CD8-positive, alpha-beta T cell (primary cell): ENCODE measurements at regions of chr3 and their contacts with region 1.

Region 1: GRCh38 chr3:101069901-101070798 is 76.9 kb upstream of the ABI3BP start:
- DNase-seq: peak; percentile 3 to 63 (median 41)
- ATAC-seq: peak; percentile 64
- H3K4me3 ChIP-seq: no peak overlapping the region
- H3K4me3 Mint-ChIP-seq: no peak overlapping the region
- H3K27ac ChIP-seq: no peak overlapping the region
- H3K27ac Mint-ChIP-seq: no peak overlapping the region
- H3K4me1 ChIP-seq: no peaks in the 10 kb centered on the region
- H3K4me1 Mint-ChIP-seq: no peaks in the 10 kb centered on the region
- H3K27me3 ChIP-seq: peaks cover 0 to 2% of the 10 kb centered on the region in 2 experiments
- H3K27me3 Mint-ChIP-seq: peaks cover 7% of the 10 kb centered on the region
- CTCF ChIP-seq: peak; percentile 51

Region 2: DNA sequence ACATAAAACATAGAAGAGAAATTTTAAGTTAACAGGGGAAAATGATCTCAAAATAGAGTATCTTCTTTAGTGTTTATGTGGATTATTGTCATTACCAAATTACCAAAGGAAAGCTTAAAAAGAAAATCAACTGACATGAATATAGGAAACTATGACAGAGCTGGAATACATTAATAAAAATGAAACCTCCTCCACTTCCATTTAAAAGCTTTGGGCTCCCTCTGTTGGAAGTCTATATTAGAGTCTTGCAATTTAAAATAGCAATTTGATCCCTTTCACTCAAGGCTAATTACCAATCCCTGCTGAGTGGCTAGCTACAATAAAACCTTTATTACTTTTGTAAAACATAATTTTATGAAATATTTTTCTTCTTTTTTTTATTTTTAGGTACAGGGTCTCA is 311.7 kb after region 1 on chr3:
- CTCF ChIA-PET with region 1: interaction called, 7 read pairs
- POLR2A ChIA-PET with region 1: no interaction called
- intact Hi-C with region 1: loop called (anchors 1 kb)
- DNase-seq: peak in 2 of 9 experiments; percentile 46 to 61
- ATAC-seq: peak; percentile 44
- H3K4me3 ChIP-seq: no peak overlapping the region
- H3K4me3 Mint-ChIP-seq: no peak overlapping the region
- H3K27ac ChIP-seq: peak overlapping the region in 1 of 2 experiments; percentile 25
- H3K27ac Mint-ChIP-seq: peak overlapping the region; percentile 49
- H3K4me1 ChIP-seq: peaks cover 12% of the 10 kb centered on the region
- H3K4me1 Mint-ChIP-seq: peaks cover 57% of the 10 kb centered on the region
- H3K27me3 ChIP-seq: no peaks in the 10 kb centered on the region
- H3K27me3 Mint-ChIP-seq: no peaks in the 10 kb centered on the region
- CTCF ChIP-seq: peak; percentile 55

Region 3: GRCh38 chr3:101635954-101636798 is 566.0 kb after region 1 on chr3:
- CTCF ChIA-PET with region 1: interaction called, 4 read pairs
- POLR2A ChIA-PET with region 1: no interaction called
- intact Hi-C with region 1: loop called in 1 of 2 experiments (anchors 1 kb)
- DNase-seq: peak; percentile 48 to 74 (median 70)
- ATAC-seq: peak; percentile 94
- H3K4me3 ChIP-seq: no peak overlapping the region
- H3K4me3 Mint-ChIP-seq: no peak overlapping the region
- H3K27ac ChIP-seq: no peak overlapping the region
- H3K27ac Mint-ChIP-seq: no peak overlapping the region
- H3K4me1 ChIP-seq: no peaks in the 10 kb centered on the region
- H3K4me1 Mint-ChIP-seq: peaks cover 4% of the 10 kb centered on the region
- H3K27me3 ChIP-seq: no peaks in the 10 kb centered on the region
- H3K27me3 Mint-ChIP-seq: no peaks in the 10 kb centered on the region
- CTCF ChIP-seq: peak; percentile 68